HepG2 (cell line): ENCODE measurements at regions of chr5 and their contacts with region 1.

Region 1: GRCh38 chr5:142324871-142325724 is at the start of gene SPRY4:
- DNase-seq: peak; percentile 97
- ATAC-seq: peak; percentile 57
- H3K4me3 ChIP-seq: peak within 1 kb of the TSS; percentile 92 to 99 (median 98)
- H3K27ac ChIP-seq: peak within 1 kb of the TSS; percentile 93
- H3K4me1 ChIP-seq: peaks cover 65% of the 10 kb centered on the region
- H3K27me3 ChIP-seq: no peaks in the 10 kb centered on the region; a peak in 1 of 5 replicates
- CTCF ChIP-seq: no peak; the same call in 1 of the 2 replicates
- EP300 ChIP-seq: peak in 1 of 2 experiments; percentile 41; a peak in 1 of 4 replicates
- POLR2A ChIP-seq: peak in 1 of 2 experiments; percentile 93; a peak in 2 of 4 replicates
- RAD21 ChIP-seq: peak; percentile 57; the same call in 1 of the 2 replicates
- total RNA-seq, gene SPRY4: 8.9 and 9.0 TPM in 2 replicates

Region 2: DNA sequence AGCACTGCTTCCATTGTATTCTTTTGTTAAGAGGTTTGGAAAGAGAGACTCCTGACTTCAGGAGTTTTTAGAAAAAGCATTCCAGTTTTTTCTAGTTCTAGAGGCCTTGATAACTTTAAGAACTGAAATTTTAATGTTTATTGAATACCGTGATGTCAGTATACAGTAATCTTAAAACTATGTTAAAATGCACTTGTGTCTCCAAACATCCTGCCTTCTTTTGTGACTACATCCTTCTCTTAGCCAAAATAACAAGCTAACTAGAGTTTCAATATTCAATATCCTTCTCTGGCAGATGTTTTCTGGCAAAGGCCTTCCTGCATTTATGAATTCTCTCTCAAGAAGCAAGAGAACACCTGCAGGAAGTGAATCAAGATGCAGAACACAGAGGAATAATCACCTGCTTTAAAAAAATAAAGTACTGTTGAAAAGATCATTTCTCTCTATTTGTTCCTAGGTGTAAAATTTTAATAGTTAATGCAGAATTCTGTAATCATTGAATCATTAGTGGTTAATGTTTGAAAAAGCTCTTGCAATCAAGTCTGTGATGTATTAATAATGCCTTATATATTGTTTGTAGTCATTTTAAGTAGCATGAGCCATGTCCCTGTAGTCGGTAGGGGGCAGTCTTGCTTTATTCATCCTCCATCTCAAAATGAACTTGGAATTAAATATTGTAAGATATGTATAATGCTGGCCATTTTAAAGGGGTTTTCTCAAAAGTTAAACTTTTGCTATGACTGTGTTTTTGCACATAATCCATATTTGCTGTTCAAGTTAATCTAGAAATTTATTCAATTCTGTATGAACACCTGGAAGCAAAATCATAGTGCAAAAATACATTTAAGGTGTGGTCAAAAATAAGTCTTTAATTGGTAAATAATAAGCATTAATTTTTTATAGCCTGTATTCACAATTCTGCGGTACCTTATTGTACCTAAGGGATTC is 173.4 kb before region 1 on chr5:
- CTCF ChIA-PET with region 1: no interaction called
- POLR2A ChIA-PET with region 1: no interaction called
- in situ Hi-C with region 1: loop called (anchors 25 kb)
- intact Hi-C with region 1: loop called (anchors 2 kb)
- DNase-seq: peak; percentile 48
- ATAC-seq: peak; percentile 53
- H3K4me3 ChIP-seq: no peak overlapping the region
- H3K27ac ChIP-seq: no peak overlapping the region
- H3K4me1 ChIP-seq: peaks cover 25% of the 10 kb centered on the region
- H3K27me3 ChIP-seq: no peaks in the 10 kb centered on the region
- CTCF ChIP-seq: peak; percentile 75
- EP300 ChIP-seq: no peak
- POLR2A ChIP-seq: no peak
- RAD21 ChIP-seq: peak; percentile 73

Region 3: GRCh38 chr5:142167458-142167857 is 157.6 kb before region 1 on chr5:
- CTCF ChIA-PET with region 1: no interaction called
- POLR2A ChIA-PET with region 1: interaction called, 3 read pairs
- in situ Hi-C with region 1: loop called (anchors 25 kb)
- intact Hi-C with region 1: loop called (anchors 5 kb)
- DNase-seq: no peak
- ATAC-seq: no peak
- H3K4me3 ChIP-seq: no peak overlapping the region
- H3K27ac ChIP-seq: no peak overlapping the region
- H3K4me1 ChIP-seq: peaks cover 66% of the 10 kb centered on the region
- H3K27me3 ChIP-seq: no peaks in the 10 kb centered on the region
- CTCF ChIP-seq: no peak
- EP300 ChIP-seq: no peak
- POLR2A ChIP-seq: no peak
- RAD21 ChIP-seq: no peak

Region 4: DNA sequence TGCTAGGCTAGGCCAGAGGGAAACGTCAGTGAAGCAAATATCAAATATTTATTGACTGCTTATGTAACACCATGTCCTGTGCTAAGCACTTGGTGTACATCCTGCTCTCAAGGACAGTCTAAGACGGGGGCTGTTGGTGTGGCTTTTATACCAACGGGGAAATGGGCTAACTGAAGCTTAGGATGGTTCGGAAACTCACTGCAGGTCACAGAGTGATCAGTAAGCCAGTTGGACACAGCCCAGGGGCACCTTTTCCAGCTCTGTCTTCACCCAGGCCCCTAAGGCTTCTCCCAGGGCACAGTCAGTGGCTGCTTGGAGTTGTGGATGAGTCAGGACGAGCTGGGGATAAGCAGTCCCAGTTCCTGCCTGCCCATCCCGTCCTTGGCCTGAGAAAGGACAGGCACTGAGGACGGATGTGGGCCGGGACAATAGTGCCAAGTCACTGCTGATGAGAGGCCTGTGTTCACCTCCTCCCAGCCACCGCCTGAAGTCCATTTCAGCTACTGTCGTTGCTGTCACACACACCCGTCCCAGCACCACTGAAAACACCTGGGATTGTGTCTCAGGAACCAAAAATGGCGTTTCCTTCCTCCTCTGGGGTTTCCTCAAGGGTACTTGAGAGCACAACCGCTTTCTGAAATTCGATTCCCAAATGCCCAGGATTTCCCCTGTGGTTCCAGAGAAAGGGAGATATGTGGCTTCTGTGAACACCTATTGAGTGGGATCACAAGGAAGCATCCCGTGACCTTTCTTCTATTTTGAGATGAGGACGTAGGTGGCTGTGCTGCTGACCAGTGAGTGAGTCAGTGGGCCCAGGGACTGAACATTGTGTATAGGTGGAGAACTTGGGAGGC is 17.3 kb after region 1 on chr5:
- CTCF ChIA-PET with region 1: no interaction called
- POLR2A ChIA-PET with region 1: interaction called, 18 read pairs
- in situ Hi-C with region 1: no loop called
- intact Hi-C with region 1: no loop called
- DNase-seq: peak; percentile 82
- ATAC-seq: peak; percentile 97
- H3K4me3 ChIP-seq: peak overlapping the region; percentile 10 to 54 (median 39); a peak in 4 of 6 replicates
- H3K27ac ChIP-seq: peak overlapping the region; percentile 84
- H3K4me1 ChIP-seq: peaks cover 39% of the 10 kb centered on the region
- H3K27me3 ChIP-seq: no peaks in the 10 kb centered on the region
- CTCF ChIP-seq: no peak
- EP300 ChIP-seq: no peak
- POLR2A ChIP-seq: peak; percentile 48 to 63; a peak in 2 of 4 replicates
- RAD21 ChIP-seq: no peak

Region 5: GRCh38 chr5:142356716-142357473 is 31.8 kb after region 1 on chr5:
- CTCF ChIA-PET with region 1: no interaction called
- POLR2A ChIA-PET with region 1: interaction called, 122 read pairs
- in situ Hi-C with region 1: loop called (anchors 5 kb)
- intact Hi-C with region 1: loop called (anchors 2 kb)
- DNase-seq: peak; percentile 94
- ATAC-seq: peak; percentile 64
- H3K4me3 ChIP-seq: peak overlapping the region; percentile 54 to 69 (median 63)
- H3K27ac ChIP-seq: peak overlapping the region; percentile 94
- H3K4me1 ChIP-seq: peaks cover 81% of the 10 kb centered on the region
- H3K27me3 ChIP-seq: no peaks in the 10 kb centered on the region; a peak in 1 of 5 replicates
- CTCF ChIP-seq: 0 out of 2 replicates have a peak, but pooled peaks have one; percentile 3
- EP300 ChIP-seq: peak; percentile 28 to 71; a peak in 3 of 4 replicates
- POLR2A ChIP-seq: peak; percentile 48 to 66; a peak in 2 of 4 replicates
- RAD21 ChIP-seq: peak; percentile 33; the same call in 1 of the 2 replicates

Region 6: DNA sequence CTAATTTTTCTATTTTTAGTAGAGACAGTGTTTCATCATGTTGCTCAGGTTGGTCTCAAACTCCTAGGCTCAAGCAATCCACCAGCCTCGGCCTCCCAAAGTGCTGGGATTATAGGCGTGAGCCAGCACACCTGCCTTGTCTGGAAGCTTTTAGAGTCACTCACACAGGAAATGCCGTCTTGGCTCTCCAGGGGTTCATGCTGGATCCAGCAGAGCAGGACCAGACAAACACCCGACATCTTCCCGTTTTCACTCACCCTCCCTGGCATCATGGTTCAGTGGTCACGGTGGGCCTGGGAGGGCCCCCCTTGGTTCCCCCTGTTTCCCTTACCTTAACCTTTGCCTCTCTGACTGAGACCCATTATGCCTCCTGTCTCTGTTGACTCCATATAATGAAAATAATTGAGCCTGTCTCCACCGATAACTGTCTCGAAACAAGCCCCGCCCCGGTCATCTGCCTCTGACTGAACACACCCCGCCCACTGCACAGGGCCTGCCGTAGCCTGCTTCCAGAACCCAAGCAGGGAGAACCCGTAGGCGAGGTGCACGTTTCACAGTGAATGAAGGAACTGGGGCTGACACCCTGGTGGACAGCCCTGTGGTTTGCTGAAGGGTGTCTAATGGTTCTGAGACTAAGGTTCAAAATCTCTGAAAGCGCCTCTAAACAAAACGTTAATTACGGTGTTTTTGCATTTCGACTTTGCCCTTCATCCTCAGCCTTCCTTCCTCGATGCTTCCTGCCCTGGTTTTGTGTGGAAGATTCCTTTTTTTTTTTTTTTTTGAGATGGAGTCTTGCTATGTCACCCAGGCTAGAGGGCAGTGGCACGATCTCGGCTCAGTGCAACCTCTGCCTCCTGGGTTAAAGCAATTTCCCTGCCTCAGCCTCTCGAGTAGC is 39.4 kb after region 1 on chr5:
- CTCF ChIA-PET with region 1: no interaction called
- POLR2A ChIA-PET with region 1: interaction called, 122 read pairs
- in situ Hi-C with region 1: loop called (anchors 5 kb)
- intact Hi-C with region 1: no loop called
- DNase-seq: no peak
- ATAC-seq: no peak
- H3K4me3 ChIP-seq: no peak overlapping the region
- H3K27ac ChIP-seq: peak overlapping the region; percentile 82
- H3K4me1 ChIP-seq: peaks cover 53% of the 10 kb centered on the region
- H3K27me3 ChIP-seq: no peaks in the 10 kb centered on the region
- CTCF ChIP-seq: no peak
- EP300 ChIP-seq: no peak
- POLR2A ChIP-seq: no peak
- RAD21 ChIP-seq: no peak

Region 7: GRCh38 chr5:142386137-142387032 is 61.3 kb after region 1 on chr5:
- CTCF ChIA-PET with region 1: no interaction called
- POLR2A ChIA-PET with region 1: interaction called, 5 read pairs
- in situ Hi-C with region 1: no loop called
- intact Hi-C with region 1: loop called (anchors 1 kb)
- DNase-seq: peak; percentile 24
- ATAC-seq: peak; percentile 83
- H3K4me3 ChIP-seq: peak overlapping the region in 2 of 3 experiments; percentile 12 to 38; a peak in 2 of 6 replicates
- H3K27ac ChIP-seq: peak overlapping the region; percentile 46
- H3K4me1 ChIP-seq: peaks cover 51% of the 10 kb centered on the region
- H3K27me3 ChIP-seq: no peaks in the 10 kb centered on the region
- CTCF ChIP-seq: 0 out of 2 replicates have a peak, but pooled peaks have one; percentile 13
- EP300 ChIP-seq: no peak
- POLR2A ChIP-seq: no peak
- RAD21 ChIP-seq: no peak